A673 (cell line): ENCODE measurements at regions of chr14 and their contacts with region 1.

Region 1: GRCh38 chr14:57533214-57533613 is 39.6 kb upstream of the CCDC198 start:
- DNase-seq: peak; percentile 72
- H3K4me3 ChIP-seq: no peak overlapping the region
- H3K27ac ChIP-seq: no peak overlapping the region
- H3K4me1 ChIP-seq: no peaks in the 10 kb centered on the region
- H3K27me3 ChIP-seq: no peaks in the 10 kb centered on the region
- CTCF ChIP-seq: peak; percentile 64

Region 2: GRCh38 chr14:57871459-57872080 is 338.4 kb after region 1 on chr14:
- CTCF ChIA-PET with region 1: no interaction called
- POLR2A ChIA-PET with region 1: no interaction called
- intact Hi-C with region 1: loop called (anchors 2 kb)
- DNase-seq: peak; percentile 90
- H3K4me3 ChIP-seq: no peak overlapping the region
- H3K27ac ChIP-seq: no peak overlapping the region
- H3K4me1 ChIP-seq: peaks cover 14% of the 10 kb centered on the region
- H3K27me3 ChIP-seq: no peaks in the 10 kb centered on the region
- CTCF ChIP-seq: peak; percentile 91

Region 3: DNA sequence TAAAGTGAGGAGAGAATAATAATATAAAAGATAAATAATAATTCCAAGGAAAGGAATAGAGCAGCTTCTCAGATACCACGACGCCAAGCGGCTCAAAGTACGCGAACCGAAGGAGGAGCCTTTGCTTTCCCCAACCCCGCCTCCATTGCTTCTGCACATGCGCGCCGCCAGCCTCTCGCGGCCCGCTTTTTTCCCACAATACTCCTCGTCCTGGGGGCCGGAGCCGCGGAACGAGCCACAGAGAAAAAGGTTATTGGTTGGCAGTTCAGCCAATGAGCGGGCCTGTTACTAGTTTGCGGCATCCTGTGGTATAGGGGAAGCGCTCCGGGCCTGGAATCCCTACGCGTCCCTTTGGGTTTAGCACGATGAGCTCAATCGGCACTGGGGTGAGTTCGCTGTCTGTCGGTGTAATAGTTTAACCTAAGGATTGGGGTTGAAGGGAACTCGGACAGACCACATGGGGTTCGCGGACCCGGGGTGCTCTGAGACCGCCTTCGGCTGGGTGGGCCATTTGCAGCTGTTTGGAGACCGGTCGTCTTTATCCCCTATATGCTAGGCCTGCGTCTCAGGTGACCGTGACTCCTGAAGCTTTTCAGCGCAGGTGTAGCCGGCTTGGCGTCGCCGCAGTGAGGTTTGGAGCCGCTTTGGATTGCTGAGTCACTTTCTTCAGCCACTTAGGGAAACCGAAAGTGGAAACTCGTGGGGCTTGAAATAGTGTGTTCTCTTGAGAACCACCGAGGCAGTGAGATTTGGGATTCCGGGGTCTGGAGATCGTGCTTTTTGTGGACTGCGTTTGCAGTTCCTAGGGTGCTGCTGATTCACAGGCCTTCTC is 711.6 kb after region 1 on chr14 and contains the start of gene PSMA3:
- CTCF ChIA-PET with region 1: interaction called, 10 read pairs
- POLR2A ChIA-PET with region 1: no interaction called
- intact Hi-C with region 1: no loop called
- DNase-seq: peak; percentile 99
- H3K4me3 ChIP-seq: peak within 1 kb of the TSS; percentile 88
- H3K27ac ChIP-seq: peak within 1 kb of the TSS; percentile 96
- H3K4me1 ChIP-seq: peaks cover 14% of the 10 kb centered on the region
- H3K27me3 ChIP-seq: no peaks in the 10 kb centered on the region
- CTCF ChIP-seq: no peak
- total RNA-seq, gene PSMA3: 355 and 375 TPM in 2 replicates